Heart left ventricle (tissue), 16 donors: ENCODE measurements at regions of chr15 and their contacts with region 1.

Region 1: GRCh38 chr15:83207622-83208411 is at the start of gene HDGFL3:
- DNase-seq: peak; percentile 69 to 76 (median 75)
- ATAC-seq: peak; percentile 7 to 64 (median 50)
- H3K4me3 ChIP-seq: peak within 1 kb of the TSS; percentile 48 to 93 (median 82)
- H3K27ac ChIP-seq: peak within 1 kb of the TSS; percentile 84 to 95 (median 90)
- H3K4me1 ChIP-seq: peaks cover 0 to 35% (median 18%) of the 10 kb centered on the region in 12 donors
- H3K27me3 ChIP-seq: peaks cover 0 to 3% (median 0%) of the 10 kb centered on the region in 9 donors
- CTCF ChIP-seq: peak in 3 of 12 donors; percentile 12 to 26 (median 18)
- POLR2A ChIP-seq: peak in 1 of 2 donors; percentile 38
- total RNA-seq, gene HDGFL3: 26.4 to 50.7 (median 40.1) TPM

Region 2: DNA sequence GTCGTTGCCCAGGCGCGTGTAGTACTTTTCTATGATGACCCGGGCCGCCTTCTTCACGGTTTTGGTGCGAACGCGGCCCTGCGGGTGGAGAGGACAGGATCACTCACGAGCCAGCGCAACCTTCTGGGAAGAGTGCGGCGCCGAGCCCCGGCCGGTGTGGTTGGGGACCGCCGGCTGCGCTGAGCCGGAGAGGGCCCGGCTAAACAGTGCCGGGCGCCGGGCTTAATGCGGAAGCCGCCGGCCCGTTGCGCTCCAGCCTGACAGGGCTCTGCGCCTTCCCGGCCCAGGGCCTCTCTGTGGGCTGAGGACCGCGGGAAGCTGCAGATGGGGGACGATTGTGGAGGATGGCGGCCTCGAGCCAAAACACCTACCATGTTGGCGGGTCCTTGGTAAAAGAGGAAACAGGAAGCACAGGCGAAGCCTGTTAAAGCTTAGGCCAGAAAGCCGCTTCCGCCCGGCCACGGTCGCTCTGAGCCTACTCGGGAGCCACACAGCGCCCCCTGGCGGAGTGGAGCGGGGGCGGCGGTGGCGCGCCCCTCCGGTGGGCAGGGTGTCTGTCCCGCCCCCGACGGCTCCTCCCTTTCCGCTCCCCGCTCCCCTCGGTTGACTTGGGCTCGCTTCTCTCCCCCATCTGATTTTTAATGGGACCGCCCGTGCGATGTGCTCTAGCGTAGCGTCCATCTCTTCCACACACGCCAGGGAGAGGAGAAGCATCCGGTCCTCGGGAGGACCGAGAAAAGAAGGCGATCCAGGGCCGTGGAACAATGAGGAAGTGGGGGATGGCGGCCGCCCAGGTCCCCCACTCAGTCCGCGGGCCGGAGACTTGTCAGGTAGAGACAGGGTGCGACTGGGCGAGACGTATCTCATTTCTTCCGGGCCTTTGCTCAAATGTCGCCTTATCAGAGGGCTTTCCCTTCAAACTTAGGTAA is 667.5 kb before region 1 on chr15 and contains the start of gene RPS17:
- intact Hi-C with region 1: loop called in 1 of 10 experiments (anchors 5 kb)
- DNase-seq: peak; percentile 96 to 98 (median 97)
- ATAC-seq: peak; percentile 96 to 98 (median 98)
- H3K4me3 ChIP-seq: peak within 1 kb of the TSS; percentile 64 to 99 (median 77)
- H3K27ac ChIP-seq: peak within 1 kb of the TSS; percentile 69 to 94 (median 84)
- H3K4me1 ChIP-seq: peaks cover 6 to 47% (median 20%) of the 10 kb centered on the region in 12 donors
- H3K27me3 ChIP-seq: no peaks in the 10 kb centered on the region
- CTCF ChIP-seq: peak; percentile 99 to 100 (median 100)
- POLR2A ChIP-seq: peak; percentile 49 to 87
- total RNA-seq, gene RPS17: 621 to 1,280 (median 873) TPM

Region 3: DNA sequence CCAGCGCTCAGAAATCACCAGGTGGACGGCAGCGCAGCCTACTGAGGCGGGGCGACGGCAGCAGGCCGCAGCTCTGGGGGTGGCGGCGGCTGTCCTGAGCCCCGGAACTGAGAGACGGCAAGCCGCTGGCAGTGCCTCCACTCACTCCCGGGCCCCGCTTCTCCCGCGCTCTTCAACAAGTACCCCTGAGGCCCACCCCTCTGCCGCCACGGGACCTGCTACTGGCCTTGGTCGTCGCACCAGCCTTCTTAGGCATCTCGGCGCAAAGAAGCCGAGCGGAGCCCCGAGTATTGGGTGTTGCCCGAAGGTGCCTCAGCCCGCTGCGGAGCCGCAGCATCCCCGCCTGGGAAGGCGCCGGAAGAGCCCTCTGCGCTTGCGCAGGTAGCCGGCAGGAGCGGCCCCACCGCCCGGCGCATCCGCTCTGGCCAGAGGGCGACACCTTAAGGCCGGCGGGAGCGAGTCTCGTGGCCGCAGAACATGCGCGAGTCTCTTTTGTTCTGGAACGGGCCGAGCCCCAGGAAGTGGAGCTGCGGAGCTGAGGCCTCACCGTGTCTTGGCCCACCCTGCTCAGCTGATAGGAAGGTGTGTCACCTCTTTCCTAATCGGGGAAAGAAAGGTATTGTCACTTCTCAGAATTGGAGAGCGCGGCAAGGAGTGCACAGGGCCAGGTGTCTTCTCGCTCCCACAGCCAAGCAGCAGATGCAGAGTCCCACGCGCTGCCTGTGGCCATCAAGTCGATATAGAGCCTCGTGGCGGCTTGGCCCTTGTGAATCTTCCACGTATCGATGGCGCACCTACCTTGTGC is 196.3 kb before region 1 on chr15 and contains the start of gene C15orf40:
- intact Hi-C with region 1: loop called (anchors 2 to 10 kb)
- DNase-seq: peak; percentile 91 to 95 (median 94)
- ATAC-seq: peak; percentile 96 to 99 (median 98)
- H3K4me3 ChIP-seq: peak within 1 kb of the TSS; percentile 67 to 100 (median 89)
- H3K27ac ChIP-seq: peak within 1 kb of the TSS; percentile 14 to 90 (median 82)
- H3K4me1 ChIP-seq: peaks cover 0 to 31% (median 21%) of the 10 kb centered on the region in 12 donors
- H3K27me3 ChIP-seq: no peaks in the 10 kb centered on the region
- CTCF ChIP-seq: peak; percentile 41 to 87 (median 70)
- POLR2A ChIP-seq: peak in 1 of 2 donors; percentile 71
- total RNA-seq, gene C15orf40: 6.0 to 17.0 (median 10.5) TPM

Region 4: DNA sequence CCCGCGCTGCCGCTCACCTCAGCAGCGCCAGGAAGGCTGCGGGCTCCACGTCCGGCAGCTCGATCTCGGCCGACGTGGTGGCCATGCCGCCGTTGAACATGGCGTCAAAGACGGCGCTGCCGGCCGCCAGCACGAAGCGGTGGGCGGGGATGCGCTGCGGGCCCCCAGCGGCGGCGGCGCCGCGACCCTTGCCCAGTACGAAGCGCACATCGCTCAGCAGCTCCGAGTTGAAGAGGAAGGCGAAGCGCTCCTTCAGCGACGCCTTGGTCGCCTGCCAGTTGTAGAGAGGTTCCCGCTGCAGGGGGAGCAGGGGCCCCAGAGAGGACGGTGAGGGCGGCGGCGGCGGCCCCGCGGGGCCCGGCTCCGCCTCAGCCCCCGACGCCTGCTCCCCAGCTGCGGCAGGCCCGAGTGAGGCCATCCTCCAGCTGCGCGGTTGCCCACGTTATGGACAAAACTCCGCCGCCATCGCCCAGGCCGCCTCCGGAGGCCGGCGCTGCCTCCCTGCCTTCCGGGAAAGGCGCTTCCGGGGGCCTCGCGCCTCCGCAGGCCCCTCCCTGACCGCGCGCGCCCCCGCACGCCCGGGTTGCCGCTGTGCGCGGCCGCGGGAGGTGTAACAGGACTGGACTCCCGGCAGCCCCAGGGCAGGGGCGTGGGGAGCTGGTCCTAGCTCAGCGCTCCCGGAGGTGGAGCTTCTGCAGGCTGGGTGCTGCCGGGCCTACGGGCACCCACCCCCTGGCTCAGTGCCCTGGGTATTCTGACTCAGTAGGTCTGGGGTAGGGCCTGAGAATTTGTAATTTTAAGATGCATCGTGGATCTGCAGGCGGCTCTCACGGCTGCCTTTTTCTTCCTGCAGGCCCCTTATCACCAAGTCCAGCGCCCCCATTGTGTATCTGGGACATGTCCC is 140.8 kb before region 1 on chr15 and contains the start of gene BTBD1:
- intact Hi-C with region 1: loop called in 5 of 10 experiments (anchors 1 to 10 kb)
- DNase-seq: peak; percentile 93 to 98 (median 96)
- ATAC-seq: peak; percentile 97 to 99 (median 98)
- H3K4me3 ChIP-seq: peak within 1 kb of the TSS; percentile 70 to 98 (median 94)
- H3K27ac ChIP-seq: peak within 1 kb of the TSS; percentile 93 to 99 (median 98)
- H3K4me1 ChIP-seq: peaks cover 0 to 47% (median 38%) of the 10 kb centered on the region in 12 donors
- H3K27me3 ChIP-seq: no peaks in the 10 kb centered on the region
- CTCF ChIP-seq: peak in 6 of 12 donors; percentile 6 to 35 (median 20)
- POLR2A ChIP-seq: peak; percentile 62 to 91
- total RNA-seq, gene BTBD1: 109 to 192 (median 140) TPM

Region 5: GRCh38 chr15:83108266-83109226 is 99.3 kb before region 1 on chr15:
- intact Hi-C with region 1: loop called in 2 of 10 experiments (anchors 5 to 10 kb)
- DNase-seq: peak; percentile 56 to 78 (median 68)
- ATAC-seq: peak; percentile 65 to 87 (median 77)
- H3K4me3 ChIP-seq: peak overlapping the region in 11 of 12 donors; percentile 57 to 82 (median 62)
- H3K27ac ChIP-seq: peak overlapping the region; percentile 59 to 90 (median 74)
- H3K4me1 ChIP-seq: peaks cover 4 to 50% (median 24%) of the 10 kb centered on the region in 12 donors
- H3K27me3 ChIP-seq: peaks cover 0 to 18% (median 0%) of the 10 kb centered on the region in 9 donors
- CTCF ChIP-seq: no peak
- POLR2A ChIP-seq: no peak

Region 6: GRCh38 chr15:83158401-83158800 is 49.4 kb before region 1 on chr15:
- intact Hi-C with region 1: loop called in 1 of 10 experiments (anchors 10 kb)
- DNase-seq: no peak
- ATAC-seq: no peak
- H3K4me3 ChIP-seq: no peak overlapping the region
- H3K27ac ChIP-seq: no peak overlapping the region
- H3K4me1 ChIP-seq: no peaks in the 10 kb centered on the region
- H3K27me3 ChIP-seq: no peaks in the 10 kb centered on the region
- CTCF ChIP-seq: no peak
- POLR2A ChIP-seq: no peak